Vagina (tissue), 2 donors: ENCODE measurements at regions of chr9 and their contacts with region 1.

Region 1: DNA sequence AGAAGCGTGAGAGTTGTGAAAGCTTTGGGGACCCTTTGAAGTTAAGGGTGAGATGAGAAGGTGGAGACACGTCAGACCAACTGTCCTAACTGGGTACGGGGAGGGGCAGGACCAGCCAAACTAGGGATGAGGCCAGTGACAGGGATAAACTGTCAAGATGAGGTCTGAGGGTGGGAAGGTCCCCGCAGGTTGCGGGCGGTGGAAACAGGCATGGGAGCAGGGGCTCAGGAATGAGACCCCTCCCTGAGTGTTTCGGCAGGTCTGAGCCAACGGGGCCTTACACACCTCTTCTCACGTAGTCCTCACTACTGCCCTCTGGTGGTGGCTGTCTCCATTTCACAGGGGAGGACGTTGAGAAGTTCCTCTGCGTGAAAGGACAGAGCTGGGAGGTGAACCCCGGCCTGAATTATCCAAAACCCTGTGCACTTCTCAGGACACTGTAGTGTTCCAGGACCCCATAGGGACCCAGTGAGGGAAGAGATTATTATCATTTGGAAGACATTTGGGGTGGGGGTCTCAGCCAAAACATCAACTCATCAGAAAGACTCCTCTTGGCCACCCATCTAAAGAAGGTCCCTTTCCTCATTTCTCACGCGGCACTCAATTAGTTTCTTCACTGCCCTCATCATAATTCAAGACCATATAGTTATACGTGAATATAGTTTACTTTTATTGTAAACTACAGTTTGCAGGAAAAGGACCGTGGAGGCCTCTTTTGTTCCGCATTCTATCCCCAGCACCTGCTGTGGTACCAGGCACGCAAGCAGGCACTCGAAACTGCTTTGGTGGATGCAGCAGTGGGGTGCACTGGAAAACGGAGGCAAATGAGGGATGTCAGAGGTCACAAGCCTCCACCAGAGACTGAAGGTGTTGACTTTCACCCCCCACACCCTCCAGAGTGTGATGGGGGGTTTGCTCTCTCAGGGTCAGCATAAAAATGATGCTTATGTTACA is 21.7 kb upstream of the NANS start:
- DNase-seq: no peak
- H3K4me3 ChIP-seq: no peak overlapping the region
- H3K27ac ChIP-seq: no peak overlapping the region
- H3K4me1 ChIP-seq: peaks cover 6% of the 10 kb centered on the region
- H3K27me3 ChIP-seq: no peaks in the 10 kb centered on the region
- CTCF ChIP-seq: peak; percentile 56 to 81 (median 78)
- POLR2A ChIP-seq: no peak

Region 2: GRCh38 chr9:97921959-97922724 is 112.7 kb before region 1 on chr9 and contains the start of gene TRMO:
- intact Hi-C with region 1: loop called (anchors 5 kb)
- DNase-seq: peak; percentile 97 to 99
- H3K4me3 ChIP-seq: peak within 1 kb of the TSS; percentile 46 to 57
- H3K27ac ChIP-seq: peak within 1 kb of the TSS; percentile 89
- H3K4me1 ChIP-seq: peaks cover 33% of the 10 kb centered on the region
- H3K27me3 ChIP-seq: no peaks in the 10 kb centered on the region
- CTCF ChIP-seq: peak in 2 of 3 experiments; percentile 68 to 92
- POLR2A ChIP-seq: peak in 1 of 2 donors; percentile 90
- total RNA-seq, gene TRMO: 27.7 TPM

Region 3: DNA sequence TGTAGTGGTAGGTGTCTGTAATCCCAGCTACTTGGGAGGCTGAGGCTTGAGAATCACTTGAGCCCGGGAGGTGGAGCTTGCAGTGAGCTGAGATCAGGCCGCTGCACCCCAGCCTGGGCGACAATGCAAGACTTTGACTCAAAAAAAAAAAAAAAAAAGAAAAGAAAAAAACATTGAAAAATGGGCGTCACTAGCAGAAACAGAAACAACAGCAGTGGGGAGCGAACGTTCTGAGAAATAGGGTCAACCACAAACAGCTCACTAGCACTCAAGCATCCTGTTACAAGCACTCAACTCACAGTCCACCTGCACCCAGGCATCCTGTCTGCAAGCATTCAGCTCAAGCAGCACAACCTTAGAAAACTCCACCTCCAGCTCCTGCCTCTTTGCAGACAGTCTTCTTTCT is 67.0 kb after region 1 on chr9:
- intact Hi-C with region 1: no loop called
- DNase-seq: peak in 1 of 2 donors; percentile 29
- H3K4me3 ChIP-seq: no peak overlapping the region
- H3K27ac ChIP-seq: no peak overlapping the region
- H3K4me1 ChIP-seq: no peaks in the 10 kb centered on the region
- H3K27me3 ChIP-seq: no peaks in the 10 kb centered on the region
- CTCF ChIP-seq: no peak
- POLR2A ChIP-seq: peak in 1 of 2 donors; percentile 12

Region 4: GRCh38 chr9:98429613-98430012 is 394.7 kb after region 1 on chr9:
- intact Hi-C with region 1: no loop called
- DNase-seq: no peak
- H3K4me3 ChIP-seq: no peak overlapping the region
- H3K27ac ChIP-seq: no peak overlapping the region
- H3K4me1 ChIP-seq: no peaks in the 10 kb centered on the region
- H3K27me3 ChIP-seq: no peaks in the 10 kb centered on the region
- CTCF ChIP-seq: no peak
- POLR2A ChIP-seq: no peak